Left ventricle myocardium superior (tissue), 1 donor: ENCODE measurements at regions of chr4 and their contacts with region 1.

Region 1: GRCh38 chr4:12324965-12325364 is 896.3 kb upstream of the HS3ST1 start:
- DNase-seq: no peak
- ATAC-seq: peak; percentile 35

Region 2: GRCh38 chr4:12678948-12679616 is 354.1 kb after region 1 on chr4:
- intact Hi-C with region 1: loop called (anchors 5 kb)
- DNase-seq: no peak
- ATAC-seq: no peak

Region 3: DNA sequence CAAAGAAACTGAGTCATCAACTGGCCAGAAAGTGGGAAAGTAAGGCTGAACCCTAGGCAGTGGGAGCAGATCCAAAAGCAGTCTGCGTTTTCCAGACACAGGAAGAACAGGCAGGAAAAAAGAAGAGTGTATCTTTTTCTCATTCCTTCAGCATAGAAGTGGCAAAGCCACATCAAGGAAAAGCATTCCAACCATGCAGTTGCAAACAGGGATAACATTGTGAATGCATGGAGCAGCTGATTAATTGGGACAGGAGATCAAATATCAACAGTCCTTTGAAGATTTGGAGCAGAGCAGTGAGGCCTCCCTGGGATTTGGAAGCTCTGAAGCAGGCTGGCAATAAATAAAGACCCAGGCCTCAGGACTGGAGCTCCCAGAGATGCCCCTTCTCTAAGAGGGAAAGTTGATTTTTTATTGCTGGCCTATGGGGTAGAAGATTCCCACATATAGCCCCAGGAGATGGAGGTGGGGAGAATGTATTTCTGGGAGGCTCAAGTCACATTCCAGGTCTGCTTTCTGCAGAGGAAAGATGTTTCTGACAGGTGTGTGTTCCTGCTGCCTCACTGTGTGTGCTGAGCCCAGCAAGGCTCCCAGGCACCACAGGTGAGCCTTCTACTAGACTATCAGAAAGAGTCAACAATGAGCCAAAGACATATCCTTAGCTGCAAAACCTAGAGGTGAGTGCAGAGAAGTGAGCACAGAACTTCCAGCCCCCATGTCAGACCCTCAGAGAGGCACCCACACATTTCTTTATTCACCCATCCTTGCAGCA is 936.7 kb after region 1 on chr4:
- intact Hi-C with region 1: no loop called
- DNase-seq: no peak
- ATAC-seq: no peak